ENCODE measurements at regions of chr1 and their contacts with region 1.

Region 1: GRCh38 chr1:61287734-61288133 is 205.4 kb downstream of the NFIA start:
- DNase-seq: no peak
- ATAC-seq: peak; percentile 33
- H3K4me3 ChIP-seq: no peak overlapping the region
- H3K27ac ChIP-seq: peak overlapping the region; percentile 40 to 67
- H3K4me1 ChIP-seq: peaks cover 10 to 31% of the 10 kb centered on the region in 2 donors
- H3K27me3 ChIP-seq: no peaks in the 10 kb centered on the region

Region 2: DNA sequence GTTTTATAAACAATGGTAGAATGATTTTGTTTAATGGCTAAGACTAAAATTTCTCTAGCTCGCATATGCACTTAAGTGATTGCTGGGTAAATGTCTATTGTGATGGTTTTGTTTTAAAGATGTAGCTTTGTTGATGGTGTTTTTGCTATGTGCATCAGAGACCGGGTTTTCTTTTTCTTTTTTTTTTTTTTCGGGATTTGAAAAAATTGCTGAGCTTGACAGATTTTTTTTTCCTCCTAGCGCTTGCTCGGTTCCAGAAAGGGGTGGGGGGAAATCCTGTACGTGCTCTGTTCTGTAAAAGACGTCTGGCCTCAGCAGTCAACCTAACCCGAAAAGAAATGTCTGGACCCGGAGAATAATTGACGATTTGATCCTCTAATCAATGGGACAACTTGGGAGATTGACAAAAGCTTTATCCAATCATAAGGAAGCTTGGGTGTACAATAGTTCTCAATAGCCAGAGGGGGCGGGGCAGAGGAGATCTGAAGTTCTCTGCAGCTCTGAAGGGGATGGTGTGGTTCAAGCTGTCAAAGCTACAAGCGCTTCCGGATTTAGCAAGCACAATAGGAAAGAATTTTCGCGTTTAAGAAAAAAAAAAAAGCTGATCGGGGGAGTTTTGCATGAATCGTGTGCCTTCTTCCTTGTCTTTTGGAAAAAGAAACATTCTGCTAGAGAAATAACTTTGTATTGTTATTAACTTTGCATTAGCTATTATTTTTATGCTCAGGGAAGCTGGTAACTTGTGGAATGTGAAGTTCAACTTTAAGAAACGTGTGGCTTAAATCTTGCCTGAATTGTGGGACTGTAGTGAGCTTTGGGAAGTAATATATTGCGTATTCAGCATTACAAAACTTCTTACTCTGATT is 209.8 kb before region 1 on chr1:
- intact Hi-C with region 1: loop called in 1 of 2 experiments (anchors 5 kb)
- DNase-seq: peak; percentile 92 to 96
- ATAC-seq: peak; percentile 83
- H3K4me3 ChIP-seq: peak overlapping the region; percentile 46 to 58
- H3K27ac ChIP-seq: peak overlapping the region in 1 of 2 donors; percentile 33
- H3K4me1 ChIP-seq: no peaks in the 10 kb centered on the region
- H3K27me3 ChIP-seq: no peaks in the 10 kb centered on the region

Region 3: DNA sequence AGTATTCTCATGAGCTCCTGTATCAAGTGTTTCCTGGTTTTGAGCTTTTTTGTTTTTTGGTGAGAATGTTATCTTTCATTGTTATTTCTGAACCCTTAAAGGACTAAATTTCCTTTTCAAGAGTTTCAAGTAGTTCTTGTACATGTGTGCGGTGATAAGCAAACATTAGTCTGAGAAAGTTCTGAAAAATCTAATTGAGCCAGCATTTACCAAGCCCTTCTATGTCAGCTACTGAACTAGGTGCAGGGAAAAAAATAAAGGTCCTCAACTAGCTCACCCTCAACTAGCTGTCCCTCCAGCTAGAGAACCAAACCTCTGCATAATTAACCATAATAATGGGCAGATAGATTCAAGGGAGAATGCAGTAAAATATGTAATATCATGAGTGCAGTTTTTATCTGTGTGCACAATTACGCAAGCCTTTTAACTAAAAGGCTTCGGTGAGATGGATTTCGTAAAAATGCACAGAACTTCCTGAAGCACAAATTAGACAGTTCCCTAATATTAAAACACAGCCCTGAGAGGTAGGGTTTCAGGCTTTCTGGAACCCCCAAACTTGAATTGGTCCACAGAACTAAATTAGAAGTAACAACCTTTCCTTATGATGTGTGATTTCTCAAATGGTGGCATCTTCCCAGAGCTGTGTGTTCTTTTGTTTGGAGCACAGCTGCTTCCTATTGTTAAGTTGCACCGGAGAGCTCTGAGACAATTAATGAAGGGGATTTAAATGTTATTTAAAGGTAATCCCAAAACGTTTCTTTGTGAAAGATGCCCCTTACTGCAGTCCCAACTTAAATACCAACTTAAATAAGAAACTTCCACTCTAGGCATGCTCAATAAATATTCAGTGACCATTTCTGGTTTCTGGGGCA is 39.6 kb before region 1 on chr1:
- intact Hi-C with region 1: loop called in 1 of 2 experiments (anchors 5 kb)
- DNase-seq: no peak
- ATAC-seq: no peak
- H3K4me3 ChIP-seq: no peak overlapping the region
- H3K27ac ChIP-seq: no peak overlapping the region
- H3K4me1 ChIP-seq: peaks cover 2 to 9% of the 10 kb centered on the region in 2 donors
- H3K27me3 ChIP-seq: no peaks in the 10 kb centered on the region

Measured in aorta (tissue), 5 donors.